ENCODE measurements at regions of chr16 and their contacts with region 1.

Region 1: GRCh38 chr16:85114909-85115567 is 2.8 kb upstream of the CIBAR2 start:
- DNase-seq: peak; percentile 90
- ATAC-seq: peak; percentile 95
- H3K4me3 Mint-ChIP-seq: peak overlapping the region; percentile 62
- H3K27ac Mint-ChIP-seq: peak overlapping the region; percentile 84
- H3K4me1 Mint-ChIP-seq: peaks cover 7% of the 10 kb centered on the region
- H3K27me3 Mint-ChIP-seq: no peaks in the 10 kb centered on the region

Region 2: GRCh38 chr16:85104821-85105391 is 10.1 kb before region 1 on chr16:
- CTCF ChIA-PET with region 1: interaction called, 19 read pairs
- DNase-seq: peak; percentile 71
- ATAC-seq: peak; percentile 89
- H3K4me3 Mint-ChIP-seq: no peak overlapping the region
- H3K27ac Mint-ChIP-seq: peak overlapping the region; percentile 84
- H3K4me1 Mint-ChIP-seq: peaks cover 33% of the 10 kb centered on the region
- H3K27me3 Mint-ChIP-seq: no peaks in the 10 kb centered on the region

Region 3: GRCh38 chr16:85126705-85127419 is 11.8 kb after region 1 on chr16:
- CTCF ChIA-PET with region 1: interaction called, 13 read pairs
- DNase-seq: no peak
- ATAC-seq: no peak
- H3K4me3 Mint-ChIP-seq: no peak overlapping the region
- H3K27ac Mint-ChIP-seq: no peak overlapping the region
- H3K4me1 Mint-ChIP-seq: no peaks in the 10 kb centered on the region
- H3K27me3 Mint-ChIP-seq: no peaks in the 10 kb centered on the region